ENCODE measurements at regions of chr16 and their contacts with region 1.

Region 1: DNA sequence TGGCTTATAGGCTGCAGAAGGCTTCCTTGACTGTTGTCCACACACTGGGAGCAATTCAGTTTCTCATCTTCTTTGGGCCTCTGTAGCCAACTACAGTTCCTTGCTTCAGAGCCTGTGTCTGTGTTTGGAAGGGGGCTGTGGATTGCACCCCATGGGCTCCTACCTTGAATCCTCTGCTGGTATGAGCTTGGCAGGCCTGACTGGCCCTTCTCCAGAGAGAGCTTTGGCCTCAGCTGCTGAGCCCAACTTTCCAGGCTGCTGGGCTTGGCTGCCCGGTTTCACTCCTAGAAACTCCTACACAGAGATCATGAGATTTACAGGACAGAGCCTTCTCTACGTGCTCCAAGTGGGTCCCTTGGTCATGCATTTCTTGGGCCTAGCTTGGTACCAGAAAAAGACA is 354.4 kb downstream of the SNX29 start:
- DNase-seq: no peak

Region 2: DNA sequence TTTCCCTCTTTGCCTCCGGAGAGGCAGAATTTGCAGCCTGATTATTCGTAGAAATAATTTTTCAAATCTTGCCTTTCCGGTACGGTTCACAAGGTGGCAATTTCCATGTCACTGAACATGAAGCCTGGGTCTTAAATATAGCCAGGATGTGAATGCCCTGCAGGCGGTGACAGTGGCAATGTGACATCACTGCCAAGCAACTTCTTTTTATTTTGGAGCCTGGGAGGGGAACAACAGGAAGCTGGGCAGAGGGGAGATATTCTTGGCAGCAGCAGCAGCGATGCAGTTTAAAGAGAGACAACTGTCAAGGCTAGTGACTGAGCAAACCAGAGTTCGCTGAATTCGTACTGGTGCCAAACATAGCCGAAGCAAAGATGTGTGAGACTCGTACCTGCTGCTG is 183.3 kb before region 1 on chr16:
- intact Hi-C with region 1: loop called (anchors 10 kb)
- DNase-seq: no peak

Region 3: GRCh38 chr16:12672986-12673385 is 342.0 kb after region 1 on chr16:
- intact Hi-C with region 1: no loop called
- DNase-seq: no peak